ENCODE measurements at regions of chr14 and their contacts with region 1.

Region 1: GRCh38 chr14:105045710-105046326 is 19.4 kb downstream of the GPR132 start:
- DNase-seq: no peak
- H3K4me3 ChIP-seq: no peak overlapping the region
- H3K27ac ChIP-seq: no peak overlapping the region
- H3K4me1 ChIP-seq: no peaks in the 10 kb centered on the region
- H3K27me3 ChIP-seq: no peaks in the 10 kb centered on the region
- CTCF ChIP-seq: peak; percentile 99 to 100 (median 100)
- POLR2A ChIP-seq: no peak

Region 2: GRCh38 chr14:104770851-104771272 is 275.0 kb before region 1 on chr14:
- intact Hi-C with region 1: no loop called
- DNase-seq: no peak
- H3K4me3 ChIP-seq: no peak overlapping the region
- H3K27ac ChIP-seq: no peak overlapping the region
- H3K4me1 ChIP-seq: peaks cover 23% of the 10 kb centered on the region
- H3K27me3 ChIP-seq: no peaks in the 10 kb centered on the region
- CTCF ChIP-seq: no peak
- POLR2A ChIP-seq: no peak

Region 3: GRCh38 chr14:104786091-104786586 is 259.7 kb before region 1 on chr14:
- intact Hi-C with region 1: no loop called
- DNase-seq: no peak
- H3K4me3 ChIP-seq: no peak overlapping the region
- H3K27ac ChIP-seq: no peak overlapping the region
- H3K4me1 ChIP-seq: peaks cover 50% of the 10 kb centered on the region
- H3K27me3 ChIP-seq: no peaks in the 10 kb centered on the region
- CTCF ChIP-seq: no peak
- POLR2A ChIP-seq: no peak

Region 4: DNA sequence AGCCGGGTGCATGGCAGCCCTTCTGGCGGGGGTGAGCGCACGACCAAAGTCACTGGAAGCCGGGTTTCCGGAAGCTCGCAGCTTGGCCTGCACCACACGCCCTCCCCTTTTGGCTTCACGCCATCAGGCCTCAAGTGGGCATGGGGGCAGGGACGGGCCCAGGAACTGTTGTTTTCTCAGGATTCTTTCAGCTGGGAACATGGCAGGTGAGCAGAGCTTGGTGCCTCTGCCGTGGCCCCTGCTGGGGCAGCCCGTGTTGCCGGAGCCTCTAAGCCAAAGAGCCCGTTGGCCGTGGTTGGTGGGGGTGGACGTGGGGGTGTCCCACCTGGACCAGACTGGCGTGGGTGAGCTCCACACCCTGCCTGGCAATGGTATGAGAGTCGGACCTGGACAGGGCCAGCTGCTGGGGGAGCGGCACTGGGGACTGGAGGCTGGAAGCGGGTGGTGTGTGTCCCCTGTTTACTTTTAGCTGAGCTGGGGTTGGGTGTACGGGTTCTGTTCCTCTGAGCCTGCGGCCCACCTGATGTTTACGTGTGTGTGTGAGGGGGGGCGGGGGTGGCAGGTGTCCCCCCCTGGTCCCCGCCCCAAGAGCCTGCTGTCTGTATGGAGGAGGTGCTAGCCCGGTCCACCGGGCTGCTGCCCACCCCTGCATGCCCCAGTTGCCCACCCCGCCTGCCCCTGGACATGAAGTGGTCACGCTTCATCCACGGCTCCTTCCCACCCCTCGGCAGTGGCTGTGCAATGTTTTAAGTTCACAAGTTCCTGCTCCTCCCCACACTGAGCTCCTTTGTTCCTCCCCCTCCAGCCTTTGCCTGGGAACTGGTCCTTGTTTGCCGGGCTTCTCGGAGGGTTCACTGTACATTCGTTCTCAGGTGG is 149.8 kb before region 1 on chr14:
- intact Hi-C with region 1: loop called (anchors 5 kb)
- DNase-seq: peak in 1 of 2 donors; percentile 86
- H3K4me3 ChIP-seq: no peak overlapping the region
- H3K27ac ChIP-seq: no peak overlapping the region
- H3K4me1 ChIP-seq: peaks cover 13% of the 10 kb centered on the region
- H3K27me3 ChIP-seq: no peaks in the 10 kb centered on the region
- CTCF ChIP-seq: no peak
- POLR2A ChIP-seq: no peak

Region 5: GRCh38 chr14:104976198-104977007 is 69.4 kb before region 1 on chr14:
- intact Hi-C with region 1: loop called (anchors 5 kb)
- DNase-seq: no peak
- H3K4me3 ChIP-seq: peak overlapping the region in 1 of 2 donors; percentile 48
- H3K27ac ChIP-seq: peak overlapping the region; percentile 99
- H3K4me1 ChIP-seq: peaks cover 71% of the 10 kb centered on the region
- H3K27me3 ChIP-seq: no peaks in the 10 kb centered on the region
- CTCF ChIP-seq: peak; percentile 79 to 91 (median 83)
- POLR2A ChIP-seq: no peak

Region 6: GRCh38 chr14:105020815-105021655 is 24.8 kb before region 1 on chr14 and contains the start of gene CDCA4:
- intact Hi-C with region 1: no loop called
- DNase-seq: peak in 1 of 2 donors; percentile 93
- H3K4me3 ChIP-seq: peak within 1 kb of the TSS; percentile 63 to 78
- H3K27ac ChIP-seq: peak within 1 kb of the TSS; percentile 90
- H3K4me1 ChIP-seq: peaks cover 49% of the 10 kb centered on the region
- H3K27me3 ChIP-seq: no peaks in the 10 kb centered on the region
- CTCF ChIP-seq: peak in 1 of 3 experiments; percentile 10
- POLR2A ChIP-seq: peak in 1 of 2 donors; percentile 85
- total RNA-seq, gene CDCA4: 15.2 TPM

Region 7: DNA sequence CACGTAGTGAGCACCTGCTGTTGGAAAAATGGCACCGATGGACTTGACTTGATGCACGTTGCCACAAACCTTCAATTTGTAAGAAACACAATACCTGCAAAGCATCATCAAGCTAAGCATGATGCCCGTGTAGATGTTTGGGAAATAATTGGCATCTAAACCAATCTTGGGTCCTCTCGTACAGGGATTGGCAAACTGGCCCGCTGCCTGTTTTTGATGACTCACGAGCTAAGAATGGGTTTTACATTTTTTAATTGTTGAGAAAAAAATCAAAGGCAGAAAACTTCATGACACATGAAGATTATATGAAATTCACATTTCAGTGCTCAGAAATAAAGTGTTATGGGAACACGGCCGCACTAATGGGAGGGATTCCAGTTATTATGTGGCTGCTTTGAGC is 384.7 kb after region 1 on chr14:
- intact Hi-C with region 1: no loop called
- DNase-seq: no peak
- H3K4me3 ChIP-seq: no peak overlapping the region
- H3K27ac ChIP-seq: no peak overlapping the region
- H3K4me1 ChIP-seq: peaks cover 5% of the 10 kb centered on the region
- H3K27me3 ChIP-seq: no peaks in the 10 kb centered on the region
- CTCF ChIP-seq: no peak
- POLR2A ChIP-seq: no peak

Measured in vagina (tissue), 2 donors.